ENCODE measurements at regions of chr1 and their contacts with region 1.

Region 1: GRCh38 chr1:155244368-155245162 is 10.7 kb downstream of the ENTREP3 start:
- DNase-seq: peak; percentile 76 to 96 (median 94)
- ATAC-seq: peak; percentile 92
- H3K4me3 ChIP-seq: peak overlapping the region; percentile 63
- H3K4me3 Mint-ChIP-seq: peak overlapping the region; percentile 84 to 97 (median 91)
- H3K27ac ChIP-seq: peak overlapping the region; percentile 73
- H3K27ac Mint-ChIP-seq: peak overlapping the region; percentile 94 to 100 (median 98)
- H3K4me1 ChIP-seq: peaks cover 19 to 20% of the 10 kb centered on the region in 2 donors
- H3K4me1 Mint-ChIP-seq: peaks cover 31 to 50% (median 44%) of the 10 kb centered on the region in 7 donors
- H3K27me3 ChIP-seq: no peaks in the 10 kb centered on the region
- H3K27me3 Mint-ChIP-seq: peaks cover 0 to 6% (median 3%) of the 10 kb centered on the region in 5 donors

Region 2: GRCh38 chr1:155066777-155067176 is 177.8 kb before region 1 on chr1:
- CTCF ChIA-PET with region 1: no interaction called
- POLR2A ChIA-PET with region 1: no interaction called
- intact Hi-C with region 1: no loop called
- DNase-seq: no peak
- ATAC-seq: no peak
- H3K4me3 ChIP-seq: no peak overlapping the region
- H3K4me3 Mint-ChIP-seq: peak overlapping the region in 1 of 10 donors; percentile 8
- H3K27ac ChIP-seq: no peak overlapping the region
- H3K27ac Mint-ChIP-seq: no peak overlapping the region
- H3K4me1 ChIP-seq: peaks cover 21 to 24% of the 10 kb centered on the region in 2 donors
- H3K4me1 Mint-ChIP-seq: peaks cover 21 to 49% (median 43%) of the 10 kb centered on the region in 7 donors
- H3K27me3 ChIP-seq: no peaks in the 10 kb centered on the region
- H3K27me3 Mint-ChIP-seq: peaks cover 0 to 4% (median 0%) of the 10 kb centered on the region in 5 donors

Region 3: DNA sequence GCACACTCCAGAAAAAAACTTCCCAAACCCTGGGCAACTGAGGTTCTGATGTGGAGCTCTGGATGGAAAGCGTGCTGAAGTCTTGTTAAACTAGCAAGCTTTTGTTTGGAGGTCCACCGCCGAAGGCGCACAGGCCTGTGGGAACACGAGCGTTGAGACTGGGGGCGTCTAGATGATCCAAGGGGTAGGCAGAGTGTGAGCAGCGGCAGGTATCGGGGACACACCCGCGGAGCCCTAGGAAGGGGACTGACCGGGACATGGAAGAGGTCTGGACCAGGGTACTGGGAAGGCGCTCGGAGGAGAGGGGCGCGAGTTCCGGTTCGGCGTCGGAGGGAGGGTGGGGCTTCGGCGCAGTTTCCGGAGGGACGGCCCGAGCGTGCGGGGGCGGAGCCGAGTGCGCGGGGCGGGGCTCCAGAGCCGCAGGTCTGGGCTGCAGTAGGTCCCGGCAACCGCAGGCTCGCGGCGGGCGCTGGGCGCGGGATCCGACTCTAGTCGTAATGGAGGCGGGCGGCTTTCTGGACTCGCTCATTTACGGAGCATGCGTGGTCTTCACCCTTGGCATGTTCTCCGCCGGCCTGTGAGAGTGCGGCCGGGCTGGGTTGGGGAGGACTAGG is 109.0 kb before region 1 on chr1 and contains the start of gene SLC50A1:
- CTCF ChIA-PET with region 1: no interaction called
- POLR2A ChIA-PET with region 1: no interaction called
- intact Hi-C with region 1: loop called in 1 of 2 experiments (anchors 5 kb)
- DNase-seq: peak; percentile 86 to 96 (median 90)
- ATAC-seq: peak; percentile 93
- H3K4me3 ChIP-seq: peak within 1 kb of the TSS; percentile 99
- H3K4me3 Mint-ChIP-seq: peak within 1 kb of the TSS; percentile 91 to 100 (median 98)
- H3K27ac ChIP-seq: peak within 1 kb of the TSS; percentile 99
- H3K27ac Mint-ChIP-seq: peak within 1 kb of the TSS; percentile 95 to 100 (median 98)
- H3K4me1 ChIP-seq: peaks cover 8 to 15% of the 10 kb centered on the region in 2 donors
- H3K4me1 Mint-ChIP-seq: peaks cover 41 to 58% (median 46%) of the 10 kb centered on the region in 7 donors
- H3K27me3 ChIP-seq: no peaks in the 10 kb centered on the region
- H3K27me3 Mint-ChIP-seq: peaks cover 0 to 2% (median 0%) of the 10 kb centered on the region in 5 donors
- total RNA-seq, gene SLC50A1: 21.1 to 35.6 (median 24.3) TPM

Region 4: DNA sequence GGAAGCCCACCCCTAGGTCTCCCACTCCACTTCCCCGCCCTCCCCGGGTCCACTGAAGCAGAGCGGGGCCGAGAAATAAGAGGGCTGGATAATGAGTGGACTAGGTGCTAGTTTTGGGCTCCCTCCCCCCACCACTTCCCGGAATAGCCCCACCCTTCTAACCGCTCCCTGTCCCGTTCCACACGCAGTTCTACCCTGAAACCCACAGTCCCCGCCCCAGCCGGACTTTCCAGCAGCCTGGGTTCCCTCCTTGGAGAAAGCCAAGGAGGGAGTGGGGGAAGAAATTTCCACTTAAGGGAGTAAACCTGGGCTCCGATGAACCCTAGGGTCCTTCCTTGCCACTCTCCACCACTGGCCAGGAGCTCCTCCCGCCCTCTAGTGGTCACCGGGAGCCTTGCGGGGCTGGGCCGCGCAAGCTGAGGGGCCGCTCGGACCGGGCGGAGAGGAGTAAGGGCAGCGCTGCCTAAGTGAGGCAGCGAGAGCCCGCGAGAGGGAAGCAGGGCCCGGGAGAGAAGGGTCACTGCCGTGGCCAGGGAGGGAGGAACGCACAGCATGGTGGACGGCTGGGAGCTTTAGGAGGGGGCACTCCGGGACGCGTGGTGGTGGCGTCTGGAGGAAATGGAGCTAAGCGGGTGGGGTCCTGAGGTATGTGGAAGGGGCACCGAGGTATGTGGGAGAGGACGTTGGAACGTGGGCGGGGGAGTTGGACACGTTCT is 51.1 kb before region 1 on chr1:
- CTCF ChIA-PET with region 1: no interaction called
- POLR2A ChIA-PET with region 1: interaction called, 20 read pairs
- intact Hi-C with region 1: loop called in 1 of 2 experiments (anchors 2 kb)
- DNase-seq: peak in 8 of 9 donors; percentile 38 to 89 (median 54)
- ATAC-seq: peak; percentile 54
- H3K4me3 ChIP-seq: peak overlapping the region; percentile 57
- H3K4me3 Mint-ChIP-seq: peak overlapping the region; percentile 88 to 97 (median 92)
- H3K27ac ChIP-seq: peak overlapping the region; percentile 76
- H3K27ac Mint-ChIP-seq: peak overlapping the region; percentile 92 to 99 (median 97)
- H3K4me1 ChIP-seq: peaks cover 11 to 25% of the 10 kb centered on the region in 2 donors
- H3K4me1 Mint-ChIP-seq: peaks cover 8 to 35% (median 29%) of the 10 kb centered on the region in 7 donors
- H3K27me3 ChIP-seq: no peaks in the 10 kb centered on the region
- H3K27me3 Mint-ChIP-seq: no peaks in the 10 kb centered on the region

Region 5: DNA sequence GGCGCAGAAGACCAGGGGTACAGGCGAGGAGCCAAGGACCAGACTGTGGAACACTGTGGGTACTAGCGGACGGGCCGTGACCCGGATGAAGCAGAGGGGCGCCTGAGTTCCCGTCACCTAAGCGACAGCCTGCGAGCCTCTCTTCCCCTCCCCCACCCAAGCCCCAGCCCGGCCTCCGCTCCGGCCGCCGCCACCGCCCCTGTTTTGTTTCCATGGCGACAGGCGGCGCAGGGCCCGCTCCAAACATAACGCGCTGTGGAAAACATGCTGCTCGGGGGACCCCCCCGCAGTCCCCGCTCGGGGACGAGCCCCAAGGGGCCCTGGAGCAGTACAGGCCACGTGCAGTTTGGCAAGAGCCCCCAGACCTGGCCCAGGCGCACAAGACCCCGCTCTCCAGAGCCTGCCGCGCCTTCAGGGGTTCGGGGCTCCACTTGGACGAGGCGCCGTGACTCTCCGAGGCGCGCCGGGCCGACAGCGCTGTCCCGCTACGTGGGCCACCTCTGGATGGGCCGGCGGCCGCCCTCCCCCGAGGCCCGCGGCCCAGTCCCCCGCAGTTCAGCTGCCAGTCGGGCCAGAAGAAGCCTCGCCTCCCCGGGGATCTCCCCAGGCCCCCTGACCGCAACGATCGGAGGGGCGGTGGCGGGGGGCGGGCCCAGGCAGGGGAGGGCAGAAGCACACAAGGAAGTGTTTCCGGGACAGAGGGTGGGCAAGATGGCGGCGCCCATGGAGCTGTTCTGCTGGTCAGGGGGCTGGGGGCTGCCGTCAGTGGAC is 35.8 kb before region 1 on chr1 and contains the start of gene MTX1:
- CTCF ChIA-PET with region 1: interaction called, 8 read pairs
- POLR2A ChIA-PET with region 1: interaction called, 9 read pairs
- intact Hi-C with region 1: loop called (anchors 1 kb)
- DNase-seq: peak; percentile 83 to 91 (median 88)
- ATAC-seq: peak; percentile 89
- H3K4me3 ChIP-seq: peak within 1 kb of the TSS; percentile 100
- H3K4me3 Mint-ChIP-seq: peak within 1 kb of the TSS; percentile 81 to 92 (median 88)
- H3K27ac ChIP-seq: peak within 1 kb of the TSS; percentile 100
- H3K27ac Mint-ChIP-seq: peak within 1 kb of the TSS; percentile 92 to 99 (median 96)
- H3K4me1 ChIP-seq: peaks cover 20 to 21% of the 10 kb centered on the region in 2 donors
- H3K4me1 Mint-ChIP-seq: peaks cover 19 to 30% (median 24%) of the 10 kb centered on the region in 7 donors
- H3K27me3 ChIP-seq: no peaks in the 10 kb centered on the region
- H3K27me3 Mint-ChIP-seq: no peaks in the 10 kb centered on the region
- total RNA-seq, gene MTX1: 19.5 to 40.8 (median 22.0) TPM

Region 6: GRCh38 chr1:155218854-155219591 is 25.5 kb before region 1 on chr1:
- CTCF ChIA-PET with region 1: interaction called, 3 read pairs
- POLR2A ChIA-PET with region 1: interaction called, 3 read pairs
- intact Hi-C with region 1: loop called in 1 of 2 experiments (anchors 1 kb)
- DNase-seq: peak in 1 of 9 donors; percentile 20
- ATAC-seq: no peak
- H3K4me3 ChIP-seq: no peak overlapping the region
- H3K4me3 Mint-ChIP-seq: peak overlapping the region in 2 of 10 donors; percentile 21 to 51
- H3K27ac ChIP-seq: no peak overlapping the region
- H3K27ac Mint-ChIP-seq: peak overlapping the region in 6 of 9 donors; percentile 5 to 78 (median 42)
- H3K4me1 ChIP-seq: no peaks in the 10 kb centered on the region
- H3K4me1 Mint-ChIP-seq: peaks cover 7 to 32% (median 14%) of the 10 kb centered on the region in 7 donors
- H3K27me3 ChIP-seq: no peaks in the 10 kb centered on the region
- H3K27me3 Mint-ChIP-seq: no peaks in the 10 kb centered on the region

Region 7: DNA sequence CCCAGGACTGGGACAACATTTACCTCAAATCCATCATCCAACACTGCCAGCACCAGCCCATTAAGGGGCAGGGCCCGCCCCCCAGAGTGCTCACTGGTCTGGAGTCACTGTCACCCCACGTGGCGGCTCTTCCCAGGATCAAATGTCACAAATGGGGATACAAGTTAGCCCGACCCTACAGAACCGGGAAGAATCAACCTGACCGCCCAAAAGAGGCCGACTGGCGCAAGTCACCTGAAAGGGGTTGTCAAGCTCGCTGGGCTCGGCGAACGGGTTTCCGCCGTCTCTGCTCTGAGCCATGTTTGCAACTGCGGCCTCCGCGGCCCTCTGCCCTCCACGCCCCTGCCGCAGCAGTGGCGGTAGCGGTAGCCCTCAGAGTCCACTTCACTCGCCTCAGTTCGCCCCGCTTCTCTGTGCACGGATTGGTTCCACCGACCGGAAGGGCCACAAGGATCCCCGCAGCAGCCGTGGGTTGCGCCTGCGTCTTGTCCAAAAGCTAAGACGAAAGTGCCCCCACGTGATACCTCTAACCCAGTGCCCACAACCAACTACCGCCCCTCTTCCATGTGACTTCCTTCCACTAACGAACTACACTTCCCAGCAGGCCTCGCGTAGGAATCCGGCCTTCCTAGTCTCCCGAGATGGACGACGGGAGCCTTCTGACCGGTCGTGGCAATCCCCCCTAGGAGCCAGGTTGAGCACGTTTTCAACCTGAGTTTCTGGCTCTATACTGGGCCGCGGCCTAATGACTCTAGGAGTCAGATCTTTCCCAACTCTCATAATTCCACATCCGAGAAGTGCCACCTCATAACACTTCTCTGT is 17.5 kb after region 1 on chr1 and contains the start of gene SCAMP3:
- CTCF ChIA-PET with region 1: interaction called, 42 read pairs
- POLR2A ChIA-PET with region 1: interaction called, 34 read pairs
- intact Hi-C with region 1: loop called (anchors 1 kb)
- DNase-seq: peak; percentile 52 to 89 (median 79)
- ATAC-seq: peak; percentile 99
- H3K4me3 ChIP-seq: peak within 1 kb of the TSS; percentile 88
- H3K4me3 Mint-ChIP-seq: peak within 1 kb of the TSS; percentile 81 to 100 (median 98)
- H3K27ac ChIP-seq: peak within 1 kb of the TSS; percentile 87
- H3K27ac Mint-ChIP-seq: peak within 1 kb of the TSS; percentile 89 to 98 (median 96)
- H3K4me1 ChIP-seq: peaks cover 18 to 19% of the 10 kb centered on the region in 2 donors
- H3K4me1 Mint-ChIP-seq: peaks cover 22 to 42% (median 33%) of the 10 kb centered on the region in 7 donors
- H3K27me3 ChIP-seq: no peaks in the 10 kb centered on the region
- H3K27me3 Mint-ChIP-seq: no peaks in the 10 kb centered on the region
- total RNA-seq, gene SCAMP3: 50.8 to 118 (median 100) TPM

Region 8: DNA sequence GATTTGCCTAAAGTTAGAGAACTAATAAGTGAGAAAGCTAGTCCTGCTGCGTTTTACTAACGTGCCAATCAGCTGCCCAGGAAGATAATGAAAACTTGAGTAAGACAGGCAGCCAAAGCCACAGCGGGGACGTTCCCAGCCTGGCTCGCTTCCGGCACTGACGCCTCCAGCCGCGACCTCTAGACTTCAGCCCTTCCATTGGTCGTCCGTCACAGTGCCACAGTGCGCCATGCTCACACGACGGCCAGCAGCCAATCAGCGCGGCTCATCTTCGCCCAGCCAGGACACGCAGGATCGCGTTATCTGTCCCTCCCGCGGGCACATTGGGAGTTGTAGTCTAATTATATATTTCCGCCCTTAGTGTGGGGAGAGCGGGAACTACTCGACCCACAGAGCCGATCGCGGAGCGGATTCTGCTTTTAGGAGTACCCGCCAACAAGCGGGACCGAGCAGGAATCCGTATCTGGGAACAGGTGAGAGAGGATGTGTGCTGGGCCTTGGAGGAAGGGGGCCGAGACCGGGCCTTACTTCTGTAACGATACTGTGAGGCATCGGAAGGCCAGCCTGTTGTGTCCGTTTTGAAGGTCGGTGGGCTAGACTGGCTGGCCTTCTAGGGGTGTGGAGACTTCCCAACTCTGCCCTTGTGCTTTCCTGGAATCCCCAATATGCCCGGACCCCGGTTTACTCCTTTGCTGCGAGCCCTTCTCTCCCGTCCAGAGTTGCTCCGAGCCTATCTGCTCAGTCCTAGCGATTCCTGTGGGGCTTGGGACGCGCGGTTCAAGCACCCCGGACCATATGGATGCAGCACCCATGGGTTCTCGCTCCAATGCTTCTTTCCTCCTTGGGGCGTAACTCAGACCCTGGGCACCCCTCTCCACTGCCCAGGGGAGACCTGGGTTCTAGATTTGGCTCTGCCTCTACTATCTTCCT is 64.2 kb after region 1 on chr1 and contains the start of gene FDPS:
- CTCF ChIA-PET with region 1: interaction called, 10 read pairs
- POLR2A ChIA-PET with region 1: interaction called, 5 read pairs
- intact Hi-C with region 1: loop called in 1 of 2 experiments (anchors 1 kb)
- DNase-seq: peak; percentile 83 to 98 (median 95)
- ATAC-seq: peak; percentile 98
- H3K4me3 ChIP-seq: peak within 1 kb of the TSS; percentile 90
- H3K4me3 Mint-ChIP-seq: peak within 1 kb of the TSS; percentile 88 to 99 (median 97)
- H3K27ac ChIP-seq: peak within 1 kb of the TSS; percentile 87
- H3K27ac Mint-ChIP-seq: peak within 1 kb of the TSS; percentile 89 to 98 (median 96)
- H3K4me1 ChIP-seq: peaks cover 11 to 20% of the 10 kb centered on the region in 2 donors
- H3K4me1 Mint-ChIP-seq: peaks cover 12 to 43% (median 27%) of the 10 kb centered on the region in 7 donors
- H3K27me3 ChIP-seq: no peaks in the 10 kb centered on the region
- H3K27me3 Mint-ChIP-seq: no peaks in the 10 kb centered on the region
- total RNA-seq, gene FDPS: 58.5 to 193 (median 79.0) TPM

Measured in naive thymus-derived CD4-positive, alpha-beta T cell (primary cell).